Activated CD4-positive, alpha-beta T cell treated with anti-CD3 and anti-CD28 coated beads for 36 hours (primary cell): ENCODE measurements at regions of chr1 and their contacts with region 1.

Region 1: GRCh38 chr1:61049850-61050540 is 32.4 kb upstream of the NFIA start:
- DNase-seq: peak; percentile 93
- ATAC-seq: peak; percentile 86
- H3K4me3 Mint-ChIP-seq: peak overlapping the region; percentile 65
- H3K27ac Mint-ChIP-seq: no peak overlapping the region
- H3K4me1 Mint-ChIP-seq: peaks cover 22% of the 10 kb centered on the region
- H3K27me3 Mint-ChIP-seq: peaks cover 46% of the 10 kb centered on the region

Region 2: GRCh38 chr1:60257531-60257930 is 792.5 kb before region 1 on chr1:
- CTCF ChIA-PET with region 1: no interaction called
- POLR2A ChIA-PET with region 1: no interaction called
- intact Hi-C with region 1: no loop called
- DNase-seq: no peak
- ATAC-seq: no peak
- H3K4me3 Mint-ChIP-seq: no peak overlapping the region
- H3K27ac Mint-ChIP-seq: no peak overlapping the region
- H3K4me1 Mint-ChIP-seq: no peaks in the 10 kb centered on the region
- H3K27me3 Mint-ChIP-seq: no peaks in the 10 kb centered on the region

Region 3: GRCh38 chr1:61157468-61157987 is 107.5 kb after region 1 on chr1:
- CTCF ChIA-PET with region 1: interaction called, 13 read pairs
- POLR2A ChIA-PET with region 1: no interaction called
- intact Hi-C with region 1: no loop called
- DNase-seq: peak; percentile 8
- ATAC-seq: peak; percentile 42
- H3K4me3 Mint-ChIP-seq: no peak overlapping the region
- H3K27ac Mint-ChIP-seq: no peak overlapping the region
- H3K4me1 Mint-ChIP-seq: peaks cover 23% of the 10 kb centered on the region
- H3K27me3 Mint-ChIP-seq: no peaks in the 10 kb centered on the region

Region 4: GRCh38 chr1:61318319-61319125 is 268.5 kb after region 1 on chr1:
- CTCF ChIA-PET with region 1: no interaction called
- POLR2A ChIA-PET with region 1: no interaction called
- intact Hi-C with region 1: loop called in 1 of 2 experiments (anchors 5 kb)
- DNase-seq: peak; percentile 46
- ATAC-seq: peak; percentile 93
- H3K4me3 Mint-ChIP-seq: no peak overlapping the region
- H3K27ac Mint-ChIP-seq: peak overlapping the region; percentile 91
- H3K4me1 Mint-ChIP-seq: peaks cover 38% of the 10 kb centered on the region
- H3K27me3 Mint-ChIP-seq: peaks cover 8% of the 10 kb centered on the region

Region 5: GRCh38 chr1:61453111-61453961 is 403.3 kb after region 1 on chr1:
- CTCF ChIA-PET with region 1: interaction called, 8 read pairs
- POLR2A ChIA-PET with region 1: no interaction called
- intact Hi-C with region 1: loop called (anchors 1 kb)
- DNase-seq: peak; percentile 84
- ATAC-seq: peak; percentile 94
- H3K4me3 Mint-ChIP-seq: no peak overlapping the region
- H3K27ac Mint-ChIP-seq: peak overlapping the region; percentile 14
- H3K4me1 Mint-ChIP-seq: peaks cover 12% of the 10 kb centered on the region
- H3K27me3 Mint-ChIP-seq: no peaks in the 10 kb centered on the region

Region 6: DNA sequence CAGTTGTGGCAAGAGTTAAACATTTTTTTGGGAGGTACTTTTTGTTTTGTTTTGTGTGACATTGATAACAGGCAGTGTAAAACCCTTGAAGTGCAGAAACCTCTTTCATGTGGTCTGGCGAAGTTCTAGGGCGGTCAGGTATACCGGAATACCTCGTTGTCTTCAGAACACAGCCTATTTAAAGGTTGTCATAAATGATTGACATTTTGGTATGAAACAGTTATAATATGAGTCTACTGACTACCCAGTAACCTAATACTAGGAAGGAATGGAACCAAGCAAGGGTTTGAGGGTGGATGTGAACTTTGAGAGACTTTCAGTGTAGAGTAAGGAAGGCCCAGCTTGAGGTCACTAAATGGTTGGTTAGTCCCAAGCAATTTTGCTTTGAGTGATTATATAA is 732.8 kb after region 1 on chr1:
- CTCF ChIA-PET with region 1: no interaction called
- POLR2A ChIA-PET with region 1: no interaction called
- intact Hi-C with region 1: no loop called
- DNase-seq: peak; percentile 79
- ATAC-seq: peak; percentile 94
- H3K4me3 Mint-ChIP-seq: peak overlapping the region; percentile 2
- H3K27ac Mint-ChIP-seq: peak overlapping the region; percentile 65
- H3K4me1 Mint-ChIP-seq: peaks cover 49% of the 10 kb centered on the region
- H3K27me3 Mint-ChIP-seq: no peaks in the 10 kb centered on the region

Region 7: GRCh38 chr1:61851849-61852669 is 802.1 kb after region 1 on chr1:
- CTCF ChIA-PET with region 1: interaction called, 6 read pairs
- POLR2A ChIA-PET with region 1: no interaction called
- intact Hi-C with region 1: loop called (anchors 2 to 5 kb)
- DNase-seq: no peak
- ATAC-seq: peak; percentile 68
- H3K4me3 Mint-ChIP-seq: no peak overlapping the region
- H3K27ac Mint-ChIP-seq: no peak overlapping the region
- H3K4me1 Mint-ChIP-seq: no peaks in the 10 kb centered on the region
- H3K27me3 Mint-ChIP-seq: no peaks in the 10 kb centered on the region